ENCODE measurements at regions of chr15 and their contacts with region 1.

Region 1: DNA sequence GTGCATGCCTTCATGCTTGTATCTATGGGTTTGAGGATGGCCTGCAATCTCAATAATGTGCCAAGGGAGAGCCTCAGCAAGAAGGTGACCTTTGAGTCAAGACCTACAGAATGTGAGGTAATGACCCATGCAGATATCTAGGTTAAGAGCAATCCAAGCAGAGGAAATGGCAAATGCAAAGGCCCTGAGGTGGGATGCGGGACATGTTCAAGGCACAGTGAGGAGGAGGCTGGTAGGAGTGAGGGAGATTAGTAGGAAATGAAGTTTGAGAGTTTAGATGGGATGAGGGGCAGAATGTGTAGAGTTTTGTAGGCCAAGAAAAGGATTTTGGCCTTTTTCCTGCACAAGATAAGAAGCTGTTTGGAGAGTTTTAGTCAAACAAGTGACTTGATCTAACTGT is 4.7 kb upstream of the MAP2K5 start:
- DNase-seq: no peak
- H3K4me3 Mint-ChIP-seq: no peak overlapping the region
- H3K27ac Mint-ChIP-seq: no peak overlapping the region
- H3K4me1 Mint-ChIP-seq: no peaks in the 10 kb centered on the region
- H3K27me3 Mint-ChIP-seq: no peaks in the 10 kb centered on the region
- CTCF ChIP-seq: no peak

Region 2: GRCh38 chr15:67521812-67522563 is 15.8 kb before region 1 on chr15:
- CTCF ChIA-PET with region 1: no interaction called
- intact Hi-C with region 1: loop called (anchors 2 kb)
- DNase-seq: no peak
- H3K4me3 Mint-ChIP-seq: peak overlapping the region; percentile 97
- H3K27ac Mint-ChIP-seq: peak overlapping the region; percentile 80
- H3K4me1 Mint-ChIP-seq: peaks cover 24% of the 10 kb centered on the region
- H3K27me3 Mint-ChIP-seq: no peaks in the 10 kb centered on the region
- CTCF ChIP-seq: no peak